HEK293T (cell line): ENCODE measurements at regions of chr1 and their contacts with region 1.

Region 1: GRCh38 chr1:244864253-244865027 is at the start of gene HNRNPU:
- DNase-seq: peak; percentile 91

Region 2: GRCh38 chr1:244835276-244836134 is 28.9 kb before region 1 on chr1 and contains the start of gene COX20:
- CTCF ChIA-PET with region 1: interaction called, 3 read pairs
- POLR2A ChIA-PET with region 1: interaction called, 127 read pairs
- DNase-seq: peak; percentile 90

Region 3: GRCh38 chr1:244851546-244852231 is 12.8 kb before region 1 on chr1:
- CTCF ChIA-PET with region 1: interaction called, 3 read pairs
- POLR2A ChIA-PET with region 1: interaction called, 37 read pairs
- DNase-seq: no peak

Region 4: GRCh38 chr1:244918421-244919319 is 54.2 kb after region 1 on chr1:
- CTCF ChIA-PET with region 1: no interaction called
- POLR2A ChIA-PET with region 1: interaction called, 14 read pairs
- DNase-seq: peak; percentile 68

Region 5: DNA sequence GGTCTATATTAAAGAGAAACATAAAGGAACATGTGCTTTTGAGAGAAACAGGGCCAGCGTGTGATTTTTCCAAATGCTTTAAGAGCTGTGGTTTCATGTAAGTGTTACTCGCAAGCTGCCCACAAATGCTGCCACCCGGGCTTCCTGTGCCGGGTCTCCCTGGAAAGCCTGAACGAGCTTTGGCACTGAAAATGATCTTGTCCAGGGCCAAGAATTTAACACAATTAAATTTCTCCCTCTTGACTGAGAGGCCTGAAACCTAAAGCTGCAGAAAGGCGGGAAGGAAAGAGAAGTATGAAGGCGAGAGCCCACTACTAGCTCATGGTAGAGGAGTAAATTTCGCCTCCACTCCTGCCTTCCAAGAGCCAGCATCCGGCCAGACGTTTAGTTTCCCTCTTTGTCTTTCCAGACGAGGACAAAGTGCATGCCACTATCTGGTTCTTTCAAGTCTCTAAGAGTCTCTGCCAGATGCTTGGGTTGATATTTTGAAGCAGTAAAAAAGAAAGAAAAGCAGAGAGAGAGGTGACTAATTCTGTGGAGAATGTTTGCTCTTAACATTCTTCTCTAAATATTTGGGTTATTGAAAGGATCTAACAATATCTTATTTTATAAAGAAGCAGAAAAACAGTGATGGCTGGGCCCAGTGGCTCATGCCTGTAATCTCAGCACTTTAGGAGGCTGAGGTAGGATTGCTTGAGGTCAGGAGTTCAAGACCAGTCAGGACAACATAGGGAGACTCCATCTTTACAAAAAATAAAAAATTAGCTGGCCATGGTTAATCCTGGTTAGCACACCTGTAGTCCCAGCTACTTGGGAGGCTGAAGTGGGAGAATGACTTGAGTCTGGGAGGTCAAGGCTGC is 99.9 kb after region 1 on chr1:
- CTCF ChIA-PET with region 1: interaction called, 6 read pairs
- POLR2A ChIA-PET with region 1: interaction called, 129 read pairs
- DNase-seq: no peak

Region 6: DNA sequence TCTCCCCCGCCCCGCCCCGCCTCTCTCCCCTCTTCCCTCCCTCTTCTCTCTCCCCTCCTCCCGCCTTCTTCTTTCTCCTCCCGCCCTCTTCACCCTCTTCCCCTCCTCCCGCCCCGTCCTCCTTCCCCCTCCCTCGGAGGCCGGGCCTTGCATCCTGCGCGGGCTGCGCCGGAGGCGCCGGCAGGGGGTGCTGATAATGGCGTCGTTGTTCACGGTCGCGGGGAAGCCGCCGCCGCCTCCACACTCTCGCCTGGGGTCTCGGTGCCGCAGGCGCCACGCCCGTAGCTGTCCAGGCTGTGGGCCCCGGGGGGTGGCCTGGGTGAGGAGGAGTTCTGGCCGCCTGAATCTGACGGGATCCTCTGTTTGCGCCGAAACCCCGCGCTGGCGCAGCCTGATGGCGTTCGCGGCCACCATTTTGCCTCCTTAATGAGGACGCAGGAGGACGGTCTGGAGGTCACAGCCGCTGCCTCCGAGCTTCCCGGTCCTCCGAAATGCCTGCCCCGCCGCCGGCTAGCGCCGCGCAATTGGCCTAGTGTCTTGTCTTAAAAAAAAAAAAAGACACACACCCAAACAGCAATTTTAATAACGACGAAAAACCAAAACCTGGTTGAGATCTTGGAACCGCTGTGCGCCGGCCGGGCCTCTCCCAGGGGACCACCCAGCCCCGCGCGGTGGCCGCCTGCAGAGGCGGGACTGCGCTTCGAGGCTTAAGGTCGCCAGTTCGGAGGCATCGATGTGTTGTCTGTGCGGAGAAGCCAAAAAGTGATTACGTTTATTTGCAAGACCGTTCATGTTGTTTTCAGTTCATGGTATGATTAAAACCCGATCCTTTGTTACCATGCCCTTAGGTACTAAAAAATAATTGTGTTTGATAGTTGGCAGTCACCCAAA is 106.5 kb after region 1 on chr1:
- CTCF ChIA-PET with region 1: interaction called, 3 read pairs
- POLR2A ChIA-PET with region 1: interaction called, 129 read pairs
- DNase-seq: peak; percentile 83

Region 7: DNA sequence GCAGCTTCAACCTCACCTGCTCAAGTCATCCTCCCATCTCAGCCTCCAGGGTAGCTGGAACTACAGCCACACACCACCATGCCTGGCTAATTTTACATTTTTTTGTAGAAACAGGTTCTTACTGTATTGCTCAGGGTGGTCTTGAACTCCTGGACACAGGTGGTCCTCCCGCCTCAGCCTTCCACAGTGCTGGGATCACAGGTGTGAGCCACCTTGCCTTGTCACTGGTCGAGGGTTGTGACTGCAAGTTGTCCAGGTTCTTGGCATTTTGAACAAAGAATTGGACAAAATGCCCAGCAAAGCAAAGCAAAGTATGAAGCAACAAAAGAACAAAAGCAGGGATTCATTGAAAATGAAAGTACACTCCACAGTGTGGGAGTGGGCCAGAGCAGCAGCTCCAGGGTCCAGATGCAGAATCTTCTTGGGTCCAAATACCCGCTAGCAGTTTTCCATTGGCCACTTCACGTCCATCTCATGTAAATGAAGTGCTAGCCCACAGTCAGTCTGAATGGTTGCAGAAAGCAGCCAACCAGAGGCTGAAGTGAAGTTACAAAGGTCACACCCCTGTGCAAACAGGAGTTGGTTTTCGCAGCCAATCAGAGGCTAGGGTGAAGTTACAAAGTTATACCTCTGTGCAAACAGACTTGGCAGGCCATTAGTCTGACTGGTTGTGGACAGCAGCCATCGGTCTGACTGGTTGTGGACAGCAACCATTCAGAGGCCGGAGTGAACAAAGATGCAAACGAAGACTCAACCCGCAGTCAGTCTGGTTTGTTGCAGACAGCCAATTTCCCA is 180.8 kb after region 1 on chr1:
- CTCF ChIA-PET with region 1: interaction called, 7 read pairs
- POLR2A ChIA-PET with region 1: interaction called, 11 read pairs
- DNase-seq: no peak